ENCODE measurements at regions of chr11 and their contacts with region 1.

Region 1: DNA sequence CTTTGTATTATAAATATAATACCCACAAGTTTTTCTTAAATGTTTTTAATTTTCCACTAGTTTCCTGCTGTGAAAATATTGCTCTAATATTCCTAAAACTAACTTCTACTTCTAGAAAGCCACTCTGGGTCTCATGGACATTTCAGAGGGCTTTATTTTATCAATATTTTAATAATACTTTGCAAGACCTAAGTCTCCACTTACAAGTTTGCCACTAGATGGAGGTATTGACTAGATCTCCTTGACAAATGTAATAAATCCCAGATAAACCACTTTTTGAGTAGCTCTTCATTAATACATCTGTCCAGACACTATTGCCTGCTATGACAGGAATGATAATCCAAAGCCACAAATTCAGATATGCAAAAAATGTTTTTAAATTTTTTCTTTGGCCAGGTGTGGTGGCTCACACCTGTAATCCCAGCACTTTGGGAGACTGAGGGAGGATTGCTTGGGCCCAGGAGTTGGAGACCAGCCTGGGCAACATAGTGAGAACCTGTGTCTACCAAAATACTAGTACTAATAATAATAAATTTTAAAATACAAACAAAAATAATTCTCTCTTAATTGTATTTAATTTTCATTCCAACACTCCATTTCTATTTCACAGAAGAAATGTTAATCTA is 3.5 kb upstream of the ACAT1 start:
- DNase-seq: peak; percentile 64 to 78 (median 77)
- H3K4me3 ChIP-seq: no peak overlapping the region
- H3K27ac ChIP-seq: no peak overlapping the region
- H3K4me1 ChIP-seq: peaks cover 5 to 18% (median 12%) of the 10 kb centered on the region in 4 experiments
- H3K27me3 ChIP-seq: no peaks in the 10 kb centered on the region

Region 2: DNA sequence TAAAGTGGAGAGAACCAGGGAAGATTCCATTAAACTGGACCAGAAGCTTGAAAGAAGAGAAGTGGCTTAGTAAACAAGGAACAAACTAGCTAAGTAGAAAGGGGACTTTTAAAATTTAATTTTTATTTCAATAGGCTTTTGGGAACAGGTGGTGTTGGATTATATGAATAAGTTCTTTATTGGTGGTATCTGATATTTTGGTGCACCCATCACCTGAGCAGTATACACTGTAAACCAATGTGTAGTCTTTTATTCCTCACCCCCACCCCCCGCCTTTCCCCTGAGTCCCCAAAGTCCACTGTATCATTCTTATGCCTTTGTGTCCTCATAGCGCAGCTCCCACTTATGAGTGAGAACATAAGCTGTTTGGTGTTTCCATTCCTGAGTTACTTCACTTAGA is 10.9 kb after region 1 on chr11:
- CTCF ChIA-PET with region 1: interaction called, 18 read pairs
- POLR2A ChIA-PET with region 1: no interaction called
- DNase-seq: no peak
- H3K4me3 ChIP-seq: no peak overlapping the region
- H3K27ac ChIP-seq: no peak overlapping the region
- H3K4me1 ChIP-seq: peaks cover 0 to 6% (median 2%) of the 10 kb centered on the region in 4 experiments
- H3K27me3 ChIP-seq: no peaks in the 10 kb centered on the region

Region 3: DNA sequence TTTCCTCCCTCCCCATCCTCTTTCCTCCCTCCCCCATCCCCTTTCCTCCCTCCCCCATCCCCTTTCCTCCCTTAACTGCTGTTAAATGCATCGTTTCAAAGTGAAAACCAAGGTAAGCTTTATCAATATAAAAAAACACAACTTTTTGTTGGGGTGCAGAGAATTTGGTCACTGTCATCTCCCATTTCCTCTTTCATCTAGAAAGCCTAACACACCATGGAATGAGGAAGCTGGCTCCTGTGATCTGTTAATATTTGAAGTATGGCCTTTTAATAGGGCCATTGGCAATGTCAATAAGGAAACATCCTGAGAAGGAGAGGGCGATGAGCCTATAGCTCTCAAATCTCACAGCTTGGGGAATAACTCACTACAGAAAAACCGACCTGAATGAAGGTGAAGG is 468.7 kb after region 1 on chr11:
- CTCF ChIA-PET with region 1: no interaction called
- POLR2A ChIA-PET with region 1: no interaction called
- DNase-seq: no peak
- H3K4me3 ChIP-seq: no peak overlapping the region
- H3K27ac ChIP-seq: no peak overlapping the region
- H3K4me1 ChIP-seq: no peaks in the 10 kb centered on the region
- H3K27me3 ChIP-seq: peaks cover 0 to 4% (median 0%) of the 10 kb centered on the region in 5 experiments

Region 4: DNA sequence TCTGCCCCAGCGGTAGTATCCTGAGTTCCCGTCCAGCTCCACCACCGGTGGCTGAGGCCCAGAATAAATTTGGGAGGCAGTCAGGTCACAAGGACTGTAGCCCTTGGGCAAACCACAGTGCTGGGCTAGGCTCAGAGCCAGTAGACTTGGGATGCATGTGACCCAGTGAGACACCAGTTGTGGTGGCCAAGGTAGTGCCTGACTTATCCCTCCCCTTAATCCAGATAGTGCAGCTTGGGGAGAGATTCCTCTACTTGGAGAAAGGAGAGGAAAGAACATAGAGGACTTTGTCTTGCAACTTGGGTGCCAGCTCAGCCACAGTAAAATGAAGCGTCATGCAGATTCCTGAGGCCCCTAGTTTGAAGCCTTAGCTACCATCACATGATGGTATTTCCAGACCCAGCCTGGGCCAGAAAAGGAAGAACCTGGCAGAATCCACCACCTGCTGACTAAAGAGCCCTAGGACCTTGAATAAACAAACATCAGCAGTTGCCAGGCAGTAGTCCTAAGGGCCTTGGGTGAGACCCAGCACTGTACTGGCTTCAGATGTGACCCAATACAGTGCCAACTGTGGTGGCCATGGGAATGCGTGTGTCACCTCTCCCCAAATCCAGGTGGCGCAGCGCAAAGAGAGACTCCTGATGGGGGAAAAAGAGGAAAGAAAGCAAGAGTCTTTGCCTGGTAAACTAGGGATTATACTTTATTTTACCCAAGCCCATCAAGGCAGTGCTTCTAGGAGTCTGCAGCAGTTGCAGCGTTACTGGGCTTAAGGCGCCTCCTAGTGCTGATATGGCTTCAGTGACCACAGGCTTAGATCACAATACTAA is 530.1 kb after region 1 on chr11:
- CTCF ChIA-PET with region 1: interaction called, 25 read pairs
- POLR2A ChIA-PET with region 1: no interaction called
- DNase-seq: peak; percentile 65 to 79 (median 76)
- H3K4me3 ChIP-seq: no peak overlapping the region
- H3K27ac ChIP-seq: no peak overlapping the region
- H3K4me1 ChIP-seq: no peaks in the 10 kb centered on the region
- H3K27me3 ChIP-seq: no peaks in the 10 kb centered on the region

Measured in common myeloid progenitor, CD34-positive (primary cell).